PC-3 (cell line): ENCODE measurements at regions of chr4 and their contacts with region 1.

Region 1: GRCh38 chr4:62548108-62548524 is 1348.0 kb downstream of the ADGRL3 start:
- DNase-seq: peak; percentile 98
- ATAC-seq: peak; percentile 90
- H3K4me3 ChIP-seq: no peak overlapping the region
- H3K27ac ChIP-seq: peak overlapping the region; percentile 92
- H3K4me1 ChIP-seq: peaks cover 34% of the 10 kb centered on the region
- H3K27me3 ChIP-seq: no peaks in the 10 kb centered on the region
- CTCF ChIP-seq: peak; percentile 83

Region 2: DNA sequence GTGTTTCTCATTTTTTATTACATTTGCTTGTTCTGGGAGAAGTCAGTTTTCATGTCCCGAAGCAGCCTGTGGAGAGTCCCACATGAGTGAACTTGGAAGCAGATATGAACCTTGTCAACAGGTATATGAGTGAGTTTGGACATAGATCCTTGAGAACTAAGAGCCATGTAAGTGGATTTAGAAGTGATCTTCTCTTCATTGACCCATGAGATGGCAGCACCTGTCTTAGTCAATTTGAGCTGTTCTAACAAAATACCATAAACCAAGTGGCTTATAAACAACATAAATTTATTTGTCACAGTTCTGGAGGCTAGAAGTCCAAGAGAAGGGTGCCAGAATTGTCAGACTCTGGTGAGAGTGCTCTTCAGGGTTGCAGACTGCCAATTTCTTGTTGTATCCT is 304.2 kb before region 1 on chr4:
- CTCF ChIA-PET with region 1: no interaction called
- POLR2A ChIA-PET with region 1: no interaction called
- intact Hi-C with region 1: loop called (anchors 2 kb)
- DNase-seq: peak; percentile 28
- ATAC-seq: peak; percentile 78
- H3K4me3 ChIP-seq: no peak overlapping the region
- H3K27ac ChIP-seq: no peak overlapping the region
- H3K4me1 ChIP-seq: no peaks in the 10 kb centered on the region
- H3K27me3 ChIP-seq: no peaks in the 10 kb centered on the region
- CTCF ChIP-seq: peak; percentile 47

Region 3: GRCh38 chr4:62495032-62495431 is 53.1 kb before region 1 on chr4:
- CTCF ChIA-PET with region 1: no interaction called
- POLR2A ChIA-PET with region 1: no interaction called
- intact Hi-C with region 1: no loop called
- DNase-seq: peak; percentile 15
- ATAC-seq: no peak
- H3K4me3 ChIP-seq: no peak overlapping the region
- H3K27ac ChIP-seq: no peak overlapping the region
- H3K4me1 ChIP-seq: no peaks in the 10 kb centered on the region
- H3K27me3 ChIP-seq: no peaks in the 10 kb centered on the region
- CTCF ChIP-seq: no peak

Region 4: GRCh38 chr4:62622089-62622488 is 74.0 kb after region 1 on chr4:
- CTCF ChIA-PET with region 1: no interaction called
- POLR2A ChIA-PET with region 1: no interaction called
- intact Hi-C with region 1: no loop called
- DNase-seq: no peak
- ATAC-seq: no peak
- H3K4me3 ChIP-seq: no peak overlapping the region
- H3K27ac ChIP-seq: no peak overlapping the region
- H3K4me1 ChIP-seq: no peaks in the 10 kb centered on the region
- H3K27me3 ChIP-seq: no peaks in the 10 kb centered on the region
- CTCF ChIP-seq: no peak

Region 5: GRCh38 chr4:62740296-62740695 is 192.2 kb after region 1 on chr4:
- CTCF ChIA-PET with region 1: no interaction called
- POLR2A ChIA-PET with region 1: no interaction called
- intact Hi-C with region 1: no loop called
- DNase-seq: no peak
- ATAC-seq: no peak
- H3K4me3 ChIP-seq: no peak overlapping the region
- H3K27ac ChIP-seq: no peak overlapping the region
- H3K4me1 ChIP-seq: no peaks in the 10 kb centered on the region
- H3K27me3 ChIP-seq: no peaks in the 10 kb centered on the region
- CTCF ChIP-seq: no peak